ENCODE measurements at regions of chr9 and their contacts with region 1.

Region 1: GRCh38 chr9:130243015-130243734 is 22.4 kb upstream of the HMCN2 start:
- DNase-seq: peak; percentile 85
- H3K4me3 ChIP-seq: peak overlapping the region in 1 of 2 experiments; percentile 51; a peak in 1 of 4 replicates
- H3K27ac ChIP-seq: peak overlapping the region in 1 of 2 experiments; percentile 35; a peak in 1 of 4 replicates
- H3K4me1 ChIP-seq: peaks cover 0 to 21% of the 10 kb centered on the region in 2 experiments; a peak in 1 of 4 replicates
- H3K27me3 ChIP-seq: no peaks in the 10 kb centered on the region
- CTCF ChIP-seq: peak; percentile 88
- EP300 ChIP-seq: no peak
- RAD21 ChIP-seq: peak; percentile 74

Region 2: DNA sequence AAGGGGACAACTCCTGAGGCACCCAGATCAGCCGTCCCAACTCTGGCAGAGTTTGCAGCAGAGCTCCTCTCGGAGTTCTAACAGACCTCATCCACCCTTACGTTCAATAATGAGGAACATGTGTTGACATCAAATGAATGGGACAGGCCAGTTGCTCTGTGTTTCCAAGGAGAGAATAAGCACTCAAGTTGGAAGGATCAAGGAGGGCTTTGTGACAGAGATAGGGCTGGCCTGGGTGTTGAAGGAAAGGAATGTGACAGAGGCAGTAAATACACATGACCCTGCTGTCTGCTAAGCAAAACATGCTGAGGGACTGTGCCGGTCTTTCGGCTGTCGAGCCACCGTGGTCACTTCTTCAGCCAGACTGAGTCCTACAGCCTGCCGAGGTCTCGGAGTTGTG is 141.3 kb before region 1 on chr9:
- CTCF ChIA-PET with region 1: interaction called, 73 read pairs
- POLR2A ChIA-PET with region 1: no interaction called
- DNase-seq: no peak
- H3K4me3 ChIP-seq: no peak overlapping the region
- H3K27ac ChIP-seq: no peak overlapping the region
- H3K4me1 ChIP-seq: no peaks in the 10 kb centered on the region
- H3K27me3 ChIP-seq: no peaks in the 10 kb centered on the region
- CTCF ChIP-seq: no peak
- EP300 ChIP-seq: no peak
- RAD21 ChIP-seq: no peak

Region 3: GRCh38 chr9:130118841-130119518 is 124.2 kb before region 1 on chr9:
- CTCF ChIA-PET with region 1: interaction called, 28 read pairs
- POLR2A ChIA-PET with region 1: interaction called, 4 read pairs
- DNase-seq: peak; percentile 87
- H3K4me3 ChIP-seq: no peak overlapping the region
- H3K27ac ChIP-seq: peak overlapping the region; percentile 68 to 80
- H3K4me1 ChIP-seq: peaks cover 21 to 25% of the 10 kb centered on the region in 2 experiments; a peak in 3 of 4 replicates
- H3K27me3 ChIP-seq: no peaks in the 10 kb centered on the region
- CTCF ChIP-seq: no peak
- EP300 ChIP-seq: peak in 1 of 2 experiments; percentile 85; a peak in 2 of 4 replicates
- RAD21 ChIP-seq: peak; percentile 5; the same call in 1 of the 2 replicates

Region 4: GRCh38 chr9:130172161-130172857 is 70.9 kb before region 1 on chr9 and contains the start of gene NCS1:
- CTCF ChIA-PET with region 1: interaction called, 22 read pairs
- POLR2A ChIA-PET with region 1: no interaction called
- DNase-seq: peak; percentile 99
- H3K4me3 ChIP-seq: peak within 1 kb of the TSS; percentile 67 to 82
- H3K27ac ChIP-seq: peak within 1 kb of the TSS; percentile 30 to 64; a peak in 3 of 4 replicates
- H3K4me1 ChIP-seq: peaks cover 6 to 20% of the 10 kb centered on the region in 2 experiments; a peak in 1 of 4 replicates
- H3K27me3 ChIP-seq: no peaks in the 10 kb centered on the region
- CTCF ChIP-seq: no peak
- EP300 ChIP-seq: no peak
- RAD21 ChIP-seq: no peak
- polyA plus RNA-seq, gene NCS1: 40.6 and 52.9 TPM in 2 replicates

Region 5: GRCh38 chr9:130265431-130266235 is 22.5 kb after region 1 on chr9 and contains the start of gene HMCN2:
- CTCF ChIA-PET with region 1: interaction called, 13 read pairs
- POLR2A ChIA-PET with region 1: no interaction called
- DNase-seq: peak; percentile 87
- H3K4me3 ChIP-seq: peak within 1 kb of the TSS in 1 of 2 experiments; percentile 39; a peak in 2 of 4 replicates
- H3K27ac ChIP-seq: no peak within 1 kb of the TSS; a peak in 1 of 4 replicates
- H3K4me1 ChIP-seq: peaks cover 0 to 32% of the 10 kb centered on the region in 2 experiments; a peak in 1 of 4 replicates
- H3K27me3 ChIP-seq: peaks cover 48% of the 10 kb centered on the region
- CTCF ChIP-seq: no peak
- EP300 ChIP-seq: no peak
- RAD21 ChIP-seq: no peak
- polyA plus RNA-seq, gene HMCN2: 0.15 and 0.28 TPM in 2 replicates

Region 6: DNA sequence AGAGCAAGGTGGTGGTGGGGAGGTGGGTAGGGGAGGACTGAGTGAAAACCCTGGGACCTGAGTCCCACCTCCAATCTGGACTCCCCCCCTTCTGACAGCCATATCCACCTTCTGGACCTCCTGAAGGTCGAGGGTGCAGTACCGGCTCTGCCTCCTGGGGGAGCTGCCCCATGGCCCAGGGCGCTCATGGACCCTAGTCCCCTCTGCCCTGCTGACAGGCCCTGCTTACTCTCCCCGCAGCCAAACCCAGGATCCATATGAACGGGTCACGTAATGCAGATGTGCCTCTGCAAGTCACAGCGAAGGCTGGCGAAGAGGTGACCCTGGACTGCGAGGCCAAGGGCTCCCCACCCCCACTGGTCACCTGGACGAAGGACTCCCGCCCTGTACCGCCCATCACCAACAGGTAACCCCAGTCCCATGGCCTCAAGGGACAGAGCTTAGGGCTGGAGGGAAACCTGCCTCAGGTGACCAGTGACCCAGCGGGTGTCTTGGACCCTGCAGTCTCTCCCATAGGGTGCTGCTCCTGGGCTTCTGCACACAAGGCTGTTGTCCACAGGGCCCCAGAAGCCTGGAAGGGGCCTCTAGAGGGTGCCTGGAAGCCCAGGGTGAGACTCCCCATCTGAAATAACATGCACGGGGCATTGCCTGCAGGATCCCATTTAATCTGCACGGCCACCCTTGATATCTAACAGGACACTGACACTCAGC is 84.0 kb after region 1 on chr9:
- CTCF ChIA-PET with region 1: interaction called, 44 read pairs
- POLR2A ChIA-PET with region 1: interaction called, 5 read pairs
- DNase-seq: peak; percentile 82
- H3K4me3 ChIP-seq: no peak overlapping the region; a peak in 1 of 4 replicates
- H3K27ac ChIP-seq: peak overlapping the region in 1 of 2 experiments; percentile 99; a peak in 2 of 4 replicates
- H3K4me1 ChIP-seq: peaks cover 0 to 81% of the 10 kb centered on the region in 2 experiments; a peak in 2 of 4 replicates
- H3K27me3 ChIP-seq: peaks cover 14% of the 10 kb centered on the region; the same call in 1 of the 2 replicates
- CTCF ChIP-seq: peak; percentile 38
- EP300 ChIP-seq: no peak
- RAD21 ChIP-seq: peak; percentile 33; the same call in 1 of the 2 replicates

Region 7: DNA sequence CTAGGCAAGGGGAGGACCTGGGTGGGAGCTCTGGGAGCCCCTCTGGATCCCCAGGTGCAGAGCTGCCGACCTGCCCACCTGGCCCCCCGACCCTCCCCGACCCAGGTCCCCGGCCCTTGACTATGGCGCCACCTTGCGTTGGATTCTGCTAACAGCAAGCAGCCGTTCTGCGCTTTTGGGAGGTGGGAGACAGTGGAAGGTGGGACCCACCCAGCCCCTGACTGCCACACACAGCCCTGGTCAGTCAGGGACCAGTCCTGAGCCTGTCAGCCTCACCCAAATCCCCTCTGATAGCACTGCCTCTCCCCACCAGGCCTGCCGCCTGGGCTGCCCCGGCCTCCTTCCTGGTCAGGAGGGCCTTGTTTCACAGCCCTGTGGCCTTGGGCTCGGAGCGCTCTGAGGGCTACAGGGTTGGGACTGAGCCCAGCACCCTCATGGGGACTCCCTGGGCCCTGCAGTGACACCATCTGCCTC is 100.3 kb after region 1 on chr9:
- CTCF ChIA-PET with region 1: interaction called, 42 read pairs
- POLR2A ChIA-PET with region 1: no interaction called
- DNase-seq: peak; percentile 88
- H3K4me3 ChIP-seq: peak overlapping the region in 1 of 2 experiments; percentile 35; a peak in 1 of 4 replicates
- H3K27ac ChIP-seq: no peak overlapping the region
- H3K4me1 ChIP-seq: peaks cover 0 to 6% of the 10 kb centered on the region in 2 experiments; a peak in 1 of 4 replicates
- H3K27me3 ChIP-seq: no peaks in the 10 kb centered on the region
- CTCF ChIP-seq: peak; percentile 89
- EP300 ChIP-seq: no peak
- RAD21 ChIP-seq: peak; percentile 83

Region 8: GRCh38 chr9:130414910-130415746 is 172.0 kb after region 1 on chr9:
- CTCF ChIA-PET with region 1: no interaction called
- POLR2A ChIA-PET with region 1: no interaction called
- DNase-seq: no peak
- H3K4me3 ChIP-seq: no peak overlapping the region
- H3K27ac ChIP-seq: no peak overlapping the region
- H3K4me1 ChIP-seq: peaks cover 0 to 13% of the 10 kb centered on the region in 2 experiments; a peak in 1 of 4 replicates
- H3K27me3 ChIP-seq: 0 out of 2 replicates have a peak, but pooled peaks cover 4% of the 10 kb centered on the region
- CTCF ChIP-seq: no peak
- EP300 ChIP-seq: peak in 1 of 2 experiments; percentile 57; a peak in 2 of 4 replicates
- RAD21 ChIP-seq: no peak

Measured in SK-N-SH (cell line).